Naive thymus-derived CD4-positive, alpha-beta T cell (primary cell): ENCODE measurements at regions of chr3 and their contacts with region 1.

Region 1: GRCh38 chr3:157130467-157131251 is 29.3 kb downstream of the CCNL1 start:
- DNase-seq: peak; percentile 43 to 86 (median 80)
- ATAC-seq: peak; percentile 78
- H3K4me3 ChIP-seq: peak overlapping the region; percentile 35
- H3K4me3 Mint-ChIP-seq: peak overlapping the region; percentile 61 to 84 (median 74)
- H3K27ac ChIP-seq: peak overlapping the region; percentile 80
- H3K27ac Mint-ChIP-seq: peak overlapping the region; percentile 93 to 99 (median 97)
- H3K4me1 ChIP-seq: peaks cover 44 to 69% of the 10 kb centered on the region in 2 donors
- H3K4me1 Mint-ChIP-seq: peaks cover 34 to 89% (median 60%) of the 10 kb centered on the region in 7 donors
- H3K27me3 ChIP-seq: no peaks in the 10 kb centered on the region
- H3K27me3 Mint-ChIP-seq: no peaks in the 10 kb centered on the region

Region 2: GRCh38 chr3:156483961-156484787 is 646.5 kb before region 1 on chr3:
- CTCF ChIA-PET with region 1: no interaction called
- POLR2A ChIA-PET with region 1: interaction called, 5 read pairs
- intact Hi-C with region 1: loop called in 1 of 2 experiments (anchors 2 kb)
- DNase-seq: peak in 8 of 9 donors; percentile 35 to 68 (median 62)
- ATAC-seq: peak; percentile 88
- H3K4me3 ChIP-seq: peak overlapping the region; percentile 47
- H3K4me3 Mint-ChIP-seq: peak overlapping the region; percentile 52 to 85 (median 74)
- H3K27ac ChIP-seq: peak overlapping the region; percentile 63
- H3K27ac Mint-ChIP-seq: peak overlapping the region; percentile 76 to 95 (median 83)
- H3K4me1 ChIP-seq: peaks cover 21 to 25% of the 10 kb centered on the region in 2 donors
- H3K4me1 Mint-ChIP-seq: peaks cover 14 to 40% (median 35%) of the 10 kb centered on the region in 7 donors
- H3K27me3 ChIP-seq: no peaks in the 10 kb centered on the region
- H3K27me3 Mint-ChIP-seq: peaks cover 0 to 17% (median 0%) of the 10 kb centered on the region in 5 donors

Region 3: GRCh38 chr3:156554842-156555687 is 575.6 kb before region 1 on chr3 and contains the start of gene SSR3:
- CTCF ChIA-PET with region 1: no interaction called
- POLR2A ChIA-PET with region 1: interaction called, 22 read pairs
- intact Hi-C with region 1: loop called (anchors 1 kb)
- DNase-seq: peak; percentile 95 to 99 (median 98)
- ATAC-seq: peak; percentile 100
- H3K4me3 ChIP-seq: peak within 1 kb of the TSS; percentile 95
- H3K4me3 Mint-ChIP-seq: peak within 1 kb of the TSS; percentile 88 to 98 (median 97)
- H3K27ac ChIP-seq: peak within 1 kb of the TSS; percentile 85
- H3K27ac Mint-ChIP-seq: peak within 1 kb of the TSS; percentile 89 to 96 (median 92)
- H3K4me1 ChIP-seq: peaks cover 16% of the 10 kb centered on the region in 2 donors
- H3K4me1 Mint-ChIP-seq: peaks cover 29 to 57% (median 50%) of the 10 kb centered on the region in 7 donors
- H3K27me3 ChIP-seq: no peaks in the 10 kb centered on the region
- H3K27me3 Mint-ChIP-seq: no peaks in the 10 kb centered on the region
- total RNA-seq, gene SSR3: 56.0 to 158 (median 76.2) TPM

Region 4: DNA sequence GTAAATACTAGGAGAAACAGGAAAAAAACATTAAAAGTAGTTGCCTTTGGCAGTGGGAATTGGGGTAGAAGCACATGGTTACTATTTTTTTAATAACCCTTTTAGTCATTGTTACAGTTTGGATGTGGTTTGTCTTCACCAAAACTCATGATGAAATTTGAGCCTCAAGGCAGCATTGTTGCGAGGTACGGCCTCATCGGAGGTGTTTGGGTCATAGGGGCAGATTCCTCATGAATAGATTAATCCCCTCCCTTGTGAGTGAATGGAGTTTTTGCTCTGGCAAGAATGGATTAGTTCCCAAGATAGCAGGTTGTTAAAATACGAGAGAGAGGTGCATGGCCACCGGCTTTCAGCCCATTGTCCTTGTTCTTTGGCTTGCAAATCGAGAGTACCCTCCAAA is 211.9 kb before region 1 on chr3:
- CTCF ChIA-PET with region 1: no interaction called
- POLR2A ChIA-PET with region 1: no interaction called
- intact Hi-C with region 1: loop called in 1 of 2 experiments (anchors 10 kb)
- DNase-seq: no peak
- ATAC-seq: no peak
- H3K4me3 ChIP-seq: no peak overlapping the region
- H3K4me3 Mint-ChIP-seq: no peak overlapping the region
- H3K27ac ChIP-seq: no peak overlapping the region
- H3K27ac Mint-ChIP-seq: no peak overlapping the region
- H3K4me1 ChIP-seq: no peaks in the 10 kb centered on the region
- H3K4me1 Mint-ChIP-seq: no peaks in the 10 kb centered on the region
- H3K27me3 ChIP-seq: no peaks in the 10 kb centered on the region
- H3K27me3 Mint-ChIP-seq: peaks cover 0 to 31% (median 0%) of the 10 kb centered on the region in 5 donors

Region 5: DNA sequence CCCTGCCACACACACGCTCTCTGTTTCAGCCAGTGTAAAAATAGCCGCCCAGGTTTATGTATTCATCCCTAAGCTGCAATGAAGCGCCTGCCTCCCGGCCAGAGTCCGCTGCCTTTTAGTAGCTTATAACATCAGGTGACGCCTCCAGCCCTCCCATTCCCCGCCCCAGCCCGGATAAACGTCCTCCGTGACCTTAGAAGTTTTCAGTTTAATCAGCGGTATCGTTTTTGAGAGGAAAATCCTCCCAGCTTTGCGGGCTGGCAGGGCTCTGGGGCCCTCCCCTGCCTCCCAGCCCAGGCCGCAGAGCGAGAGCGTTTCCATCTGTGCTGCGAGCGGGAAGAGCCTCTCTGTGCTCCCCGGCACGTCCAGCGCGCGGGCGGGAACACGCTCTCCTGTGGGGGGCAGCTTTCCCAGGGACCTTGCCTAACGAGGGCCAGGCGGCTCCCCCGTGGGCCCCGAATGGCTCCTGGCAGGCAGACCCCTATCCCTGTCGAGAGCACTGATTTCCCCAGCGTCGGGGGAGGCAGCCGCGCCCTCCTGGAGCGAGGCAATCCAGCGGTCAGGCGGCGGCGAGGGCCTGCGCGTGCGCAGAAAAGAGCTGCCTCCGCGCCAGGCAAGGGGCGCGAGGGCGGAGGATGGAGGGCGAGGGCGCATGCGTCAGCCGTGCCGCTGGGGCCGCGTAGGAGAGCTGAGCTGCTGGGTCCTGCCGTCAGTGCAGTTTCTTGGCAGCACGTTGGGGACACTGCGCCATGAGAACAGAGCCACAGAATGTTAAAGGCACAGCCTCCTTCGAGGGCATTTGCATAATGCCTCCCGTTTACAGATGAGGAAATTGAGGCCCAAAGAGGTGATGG is 41.8 kb before region 1 on chr3:
- CTCF ChIA-PET with region 1: interaction called, 5 read pairs
- POLR2A ChIA-PET with region 1: interaction called, 49 read pairs
- intact Hi-C with region 1: loop called (anchors 1 kb)
- DNase-seq: peak; percentile 90 to 97 (median 93)
- ATAC-seq: peak; percentile 95
- H3K4me3 ChIP-seq: peak overlapping the region; percentile 84
- H3K4me3 Mint-ChIP-seq: peak overlapping the region; percentile 81 to 89 (median 87)
- H3K27ac ChIP-seq: peak overlapping the region; percentile 83
- H3K27ac Mint-ChIP-seq: peak overlapping the region; percentile 92 to 98 (median 96)
- H3K4me1 ChIP-seq: peaks cover 11 to 30% of the 10 kb centered on the region in 2 donors
- H3K4me1 Mint-ChIP-seq: peaks cover 11 to 79% (median 23%) of the 10 kb centered on the region in 7 donors
- H3K27me3 ChIP-seq: no peaks in the 10 kb centered on the region
- H3K27me3 Mint-ChIP-seq: peaks cover 0 to 6% (median 0%) of the 10 kb centered on the region in 5 donors

Region 6: GRCh38 chr3:157119369-157119951 is 11.2 kb before region 1 on chr3:
- CTCF ChIA-PET with region 1: no interaction called
- POLR2A ChIA-PET with region 1: interaction called, 13 read pairs
- intact Hi-C with region 1: loop called (anchors 1 kb)
- DNase-seq: no peak
- ATAC-seq: peak; percentile 68
- H3K4me3 ChIP-seq: no peak overlapping the region
- H3K4me3 Mint-ChIP-seq: peak overlapping the region in 1 of 10 donors; percentile 47
- H3K27ac ChIP-seq: no peak overlapping the region
- H3K27ac Mint-ChIP-seq: peak overlapping the region in 4 of 9 donors; percentile 8 to 70 (median 37)
- H3K4me1 ChIP-seq: peaks cover 0 to 9% of the 10 kb centered on the region in 2 donors
- H3K4me1 Mint-ChIP-seq: peaks cover 0 to 30% (median 2%) of the 10 kb centered on the region in 7 donors
- H3K27me3 ChIP-seq: no peaks in the 10 kb centered on the region
- H3K27me3 Mint-ChIP-seq: no peaks in the 10 kb centered on the region

Region 7: GRCh38 chr3:157311633-157312375 is 181.1 kb after region 1 on chr3:
- CTCF ChIA-PET with region 1: no interaction called
- POLR2A ChIA-PET with region 1: no interaction called
- intact Hi-C with region 1: no loop called
- DNase-seq: no peak
- ATAC-seq: no peak
- H3K4me3 ChIP-seq: no peak overlapping the region
- H3K4me3 Mint-ChIP-seq: no peak overlapping the region
- H3K27ac ChIP-seq: no peak overlapping the region
- H3K27ac Mint-ChIP-seq: no peak overlapping the region
- H3K4me1 ChIP-seq: no peaks in the 10 kb centered on the region
- H3K4me1 Mint-ChIP-seq: no peaks in the 10 kb centered on the region
- H3K27me3 ChIP-seq: no peaks in the 10 kb centered on the region
- H3K27me3 Mint-ChIP-seq: peaks cover 0 to 4% (median 0%) of the 10 kb centered on the region in 5 donors